Heart right ventricle (tissue), 16 donors: ENCODE measurements at regions of chr15 and their contacts with region 1.

Region 1: GRCh38 chr15:89358755-89359439 is 24.3 kb upstream of the POLG start:
- DNase-seq: peak; percentile 58 to 77
- ATAC-seq: peak; percentile 83 to 95 (median 89)
- H3K4me3 ChIP-seq: peak overlapping the region in 9 of 10 donors; percentile 28 to 57 (median 52)
- H3K27ac ChIP-seq: no peak overlapping the region
- H3K4me1 ChIP-seq: peaks cover 3 to 33% (median 14%) of the 10 kb centered on the region in 9 donors
- H3K27me3 ChIP-seq: peaks cover 54 to 100% (median 96%) of the 10 kb centered on the region in 7 donors
- CTCF ChIP-seq: peak; percentile 96 to 100 (median 98)

Region 2: DNA sequence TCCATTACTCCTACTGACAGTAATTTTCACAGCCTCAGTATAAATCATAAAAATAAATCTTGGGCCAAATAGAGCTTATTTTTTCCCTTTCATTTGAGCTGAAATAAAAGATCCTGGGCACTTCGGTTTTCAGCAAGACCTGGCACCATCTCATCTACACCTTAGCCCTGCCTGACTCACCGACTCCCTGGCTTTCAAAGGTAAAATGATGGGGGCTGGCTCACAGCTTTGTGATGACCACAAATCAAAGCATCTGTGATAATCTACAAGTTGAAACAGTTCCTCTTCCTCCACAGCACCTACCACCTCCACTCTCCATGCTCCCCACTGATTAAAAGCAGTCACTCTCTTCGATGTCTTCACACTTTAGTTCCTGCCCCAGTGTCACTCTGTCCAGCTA is 840.0 kb before region 1 on chr15:
- intact Hi-C with region 1: no loop called
- DNase-seq: no peak
- ATAC-seq: no peak
- H3K4me3 ChIP-seq: no peak overlapping the region
- H3K27ac ChIP-seq: no peak overlapping the region
- H3K4me1 ChIP-seq: no peaks in the 10 kb centered on the region
- H3K27me3 ChIP-seq: no peaks in the 10 kb centered on the region
- CTCF ChIP-seq: no peak

Region 3: DNA sequence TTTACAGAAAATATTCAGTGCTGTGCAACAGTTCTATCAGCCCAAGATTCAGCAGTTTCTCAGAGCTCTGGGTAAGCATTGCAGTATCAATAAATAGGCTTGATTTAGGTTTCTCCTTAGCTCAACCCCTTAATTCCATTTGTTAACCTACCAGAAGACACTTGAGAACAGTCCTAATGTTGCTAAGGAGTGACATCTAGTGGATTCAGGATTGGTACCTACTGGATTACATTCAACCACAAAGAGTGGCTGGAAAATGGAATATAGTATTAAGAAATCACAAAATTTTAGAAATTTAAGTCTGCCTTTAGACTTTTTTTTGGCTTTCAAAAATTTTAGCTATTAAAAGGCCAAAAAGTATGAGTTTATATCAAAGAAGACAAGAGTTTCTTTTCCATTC is 59.0 kb before region 1 on chr15:
- intact Hi-C with region 1: no loop called
- DNase-seq: no peak
- ATAC-seq: peak in 1 of 8 donors; percentile 53
- H3K4me3 ChIP-seq: no peak overlapping the region
- H3K27ac ChIP-seq: no peak overlapping the region
- H3K4me1 ChIP-seq: no peaks in the 10 kb centered on the region
- H3K27me3 ChIP-seq: no peaks in the 10 kb centered on the region
- CTCF ChIP-seq: peak in 6 of 9 donors; percentile 17 to 51 (median 41)

Region 4: GRCh38 chr15:89421219-89421618 is 62.3 kb after region 1 on chr15:
- intact Hi-C with region 1: loop called in 1 of 10 experiments (anchors 5 kb)
- DNase-seq: no peak
- ATAC-seq: no peak
- H3K4me3 ChIP-seq: no peak overlapping the region
- H3K27ac ChIP-seq: no peak overlapping the region
- H3K4me1 ChIP-seq: no peaks in the 10 kb centered on the region
- H3K27me3 ChIP-seq: peaks cover 9 to 98% (median 78%) of the 10 kb centered on the region in 7 donors
- CTCF ChIP-seq: no peak

Region 5: GRCh38 chr15:89430530-89431341 is 71.8 kb after region 1 on chr15:
- intact Hi-C with region 1: loop called (anchors 1 to 2 kb)
- DNase-seq: peak; percentile 87 to 88
- ATAC-seq: peak; percentile 89 to 97 (median 93)
- H3K4me3 ChIP-seq: peak overlapping the region in 9 of 10 donors; percentile 16 to 59 (median 51)
- H3K27ac ChIP-seq: peak overlapping the region in 1 of 10 donors; percentile 16
- H3K4me1 ChIP-seq: peaks cover 0 to 16% (median 7%) of the 10 kb centered on the region in 9 donors
- H3K27me3 ChIP-seq: peaks cover 0 to 46% (median 21%) of the 10 kb centered on the region in 7 donors
- CTCF ChIP-seq: peak; percentile 97 to 99 (median 99)

Region 6: DNA sequence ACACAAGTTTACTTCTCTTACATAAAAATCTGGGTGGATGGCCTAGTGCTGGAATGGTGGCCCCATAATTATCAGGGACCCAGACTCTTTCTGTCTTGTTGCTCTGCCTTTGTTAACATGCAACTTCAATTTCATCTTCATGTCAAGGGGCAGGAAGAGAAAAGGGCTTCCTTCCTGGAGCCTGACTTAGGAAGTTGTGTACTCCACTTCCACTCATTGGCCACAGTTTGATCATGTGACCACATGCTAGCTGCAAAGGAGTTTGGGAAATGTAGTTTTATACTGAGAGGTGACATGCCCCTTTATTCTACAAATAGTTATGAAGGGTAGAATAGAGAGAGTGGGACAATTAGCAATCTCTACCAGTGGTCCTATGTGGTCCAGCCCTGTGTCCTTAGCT is 98.2 kb after region 1 on chr15:
- intact Hi-C with region 1: no loop called
- DNase-seq: no peak
- ATAC-seq: no peak
- H3K4me3 ChIP-seq: no peak overlapping the region
- H3K27ac ChIP-seq: no peak overlapping the region
- H3K4me1 ChIP-seq: no peaks in the 10 kb centered on the region
- H3K27me3 ChIP-seq: peaks cover 0 to 46% (median 33%) of the 10 kb centered on the region in 7 donors
- CTCF ChIP-seq: no peak

Region 7: GRCh38 chr15:89472785-89473256 is 113.9 kb after region 1 on chr15:
- intact Hi-C with region 1: loop called in 5 of 10 experiments (anchors 2 to 5 kb)
- DNase-seq: peak in 1 of 2 donors; percentile 17
- ATAC-seq: peak in 6 of 8 donors; percentile 48 to 78 (median 55)
- H3K4me3 ChIP-seq: no peak overlapping the region
- H3K27ac ChIP-seq: no peak overlapping the region
- H3K4me1 ChIP-seq: no peaks in the 10 kb centered on the region
- H3K27me3 ChIP-seq: peaks cover 12 to 62% (median 44%) of the 10 kb centered on the region in 7 donors
- CTCF ChIP-seq: peak; percentile 11 to 67 (median 61)

Region 8: GRCh38 chr15:89551502-89551901 is 192.6 kb after region 1 on chr15:
- intact Hi-C with region 1: loop called in 3 of 10 experiments (anchors 5 to 10 kb)
- DNase-seq: no peak
- ATAC-seq: no peak
- H3K4me3 ChIP-seq: no peak overlapping the region
- H3K27ac ChIP-seq: no peak overlapping the region
- H3K4me1 ChIP-seq: no peaks in the 10 kb centered on the region
- H3K27me3 ChIP-seq: peaks cover 0 to 26% (median 3%) of the 10 kb centered on the region in 7 donors
- CTCF ChIP-seq: no peak

Region 9: GRCh38 chr15:89556413-89557262 is 197.7 kb after region 1 on chr15:
- intact Hi-C with region 1: loop called in 3 of 10 experiments (anchors 5 to 10 kb)
- DNase-seq: peak in 1 of 2 donors; percentile 57
- ATAC-seq: peak in 4 of 8 donors; percentile 29 to 54 (median 37)
- H3K4me3 ChIP-seq: no peak overlapping the region
- H3K27ac ChIP-seq: no peak overlapping the region
- H3K4me1 ChIP-seq: no peaks in the 10 kb centered on the region
- H3K27me3 ChIP-seq: peaks cover 0 to 38% (median 24%) of the 10 kb centered on the region in 7 donors
- CTCF ChIP-seq: peak; percentile 55 to 86 (median 81)

Region 10: DNA sequence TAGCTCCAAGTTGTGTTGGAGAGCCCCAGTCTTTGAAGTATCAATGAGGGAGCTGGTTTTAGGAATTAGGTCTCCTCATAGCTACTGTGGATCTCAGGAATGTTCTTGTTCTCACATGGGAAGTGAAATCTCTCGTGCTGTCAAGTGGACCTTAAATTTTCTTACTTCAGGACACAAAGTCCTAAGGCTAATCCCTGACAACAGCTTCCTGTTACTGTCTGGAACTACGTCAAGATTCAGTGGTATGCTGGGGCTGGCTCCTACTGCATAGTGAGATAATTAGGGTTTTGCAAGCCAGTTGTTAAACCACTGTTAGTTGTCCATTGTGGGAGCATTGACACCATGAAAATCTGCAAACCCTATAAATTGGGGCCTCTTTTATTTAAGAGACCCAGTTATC is 369.4 kb after region 1 on chr15:
- intact Hi-C with region 1: no loop called
- DNase-seq: no peak
- ATAC-seq: peak in 2 of 8 donors; percentile 76 to 79
- H3K4me3 ChIP-seq: no peak overlapping the region
- H3K27ac ChIP-seq: no peak overlapping the region
- H3K4me1 ChIP-seq: peaks cover 0 to 6% (median 0%) of the 10 kb centered on the region in 9 donors
- H3K27me3 ChIP-seq: peaks cover 0 to 3% (median 0%) of the 10 kb centered on the region in 7 donors
- CTCF ChIP-seq: no peak